ENCODE measurements at regions of chr2 and their contacts with region 1.

Region 1: DNA sequence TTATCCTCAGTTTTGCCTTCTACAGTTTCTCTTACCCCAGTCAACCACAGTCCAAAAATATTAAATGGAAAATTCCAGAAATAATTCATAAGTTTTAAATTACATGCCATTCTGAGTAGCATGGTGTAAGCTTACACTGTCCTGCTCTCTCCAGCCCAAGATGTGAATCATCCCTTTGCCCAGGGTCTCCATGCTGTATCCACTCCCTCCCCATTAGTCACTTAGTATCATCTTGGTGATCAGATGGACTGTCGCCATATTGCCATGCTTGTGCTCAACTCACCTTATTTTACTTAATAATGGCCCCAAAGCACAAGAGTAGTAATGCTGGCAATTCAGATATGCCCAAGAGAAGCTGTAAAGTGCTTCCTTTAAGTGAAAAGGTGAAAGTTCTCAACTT is 18.5 kb upstream of the CCNT2 start:
- DNase-seq: no peak
- H3K4me3 ChIP-seq: no peak overlapping the region
- H3K27ac ChIP-seq: no peak overlapping the region
- H3K4me1 ChIP-seq: peaks cover 0 to 2% (median 0%) of the 10 kb centered on the region in 4 experiments
- H3K27me3 ChIP-seq: no peaks in the 10 kb centered on the region

Region 2: DNA sequence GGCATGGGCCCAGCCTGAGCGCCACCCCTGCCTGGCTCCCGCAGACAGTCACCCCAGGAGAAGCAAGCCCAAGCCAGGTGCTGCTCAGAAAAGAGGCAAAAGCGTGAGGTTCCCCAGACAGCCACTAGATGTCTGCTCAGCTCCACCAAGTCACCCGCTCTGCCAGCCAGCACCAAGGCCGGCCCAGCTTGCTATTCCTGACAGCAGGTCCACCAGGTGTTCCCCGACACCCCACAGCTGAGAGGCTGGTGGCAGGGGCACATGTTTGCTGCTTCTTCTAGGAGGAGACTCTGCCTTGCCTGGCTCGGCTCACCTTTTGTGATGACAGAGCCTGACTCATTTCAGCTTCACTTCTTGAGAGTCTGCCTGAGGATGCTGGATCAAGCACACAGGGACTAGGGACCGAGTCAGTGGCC is 439.6 kb before region 1 on chr2:
- CTCF ChIA-PET with region 1: interaction called, 18 read pairs
- POLR2A ChIA-PET with region 1: no interaction called
- DNase-seq: peak; percentile 38 to 65 (median 57)
- H3K4me3 ChIP-seq: no peak overlapping the region
- H3K27ac ChIP-seq: no peak overlapping the region
- H3K4me1 ChIP-seq: peaks cover 0 to 3% (median 2%) of the 10 kb centered on the region in 4 experiments
- H3K27me3 ChIP-seq: no peaks in the 10 kb centered on the region